A549 (cell line): ENCODE measurements at regions of chr9 and their contacts with region 1.

Region 1: DNA sequence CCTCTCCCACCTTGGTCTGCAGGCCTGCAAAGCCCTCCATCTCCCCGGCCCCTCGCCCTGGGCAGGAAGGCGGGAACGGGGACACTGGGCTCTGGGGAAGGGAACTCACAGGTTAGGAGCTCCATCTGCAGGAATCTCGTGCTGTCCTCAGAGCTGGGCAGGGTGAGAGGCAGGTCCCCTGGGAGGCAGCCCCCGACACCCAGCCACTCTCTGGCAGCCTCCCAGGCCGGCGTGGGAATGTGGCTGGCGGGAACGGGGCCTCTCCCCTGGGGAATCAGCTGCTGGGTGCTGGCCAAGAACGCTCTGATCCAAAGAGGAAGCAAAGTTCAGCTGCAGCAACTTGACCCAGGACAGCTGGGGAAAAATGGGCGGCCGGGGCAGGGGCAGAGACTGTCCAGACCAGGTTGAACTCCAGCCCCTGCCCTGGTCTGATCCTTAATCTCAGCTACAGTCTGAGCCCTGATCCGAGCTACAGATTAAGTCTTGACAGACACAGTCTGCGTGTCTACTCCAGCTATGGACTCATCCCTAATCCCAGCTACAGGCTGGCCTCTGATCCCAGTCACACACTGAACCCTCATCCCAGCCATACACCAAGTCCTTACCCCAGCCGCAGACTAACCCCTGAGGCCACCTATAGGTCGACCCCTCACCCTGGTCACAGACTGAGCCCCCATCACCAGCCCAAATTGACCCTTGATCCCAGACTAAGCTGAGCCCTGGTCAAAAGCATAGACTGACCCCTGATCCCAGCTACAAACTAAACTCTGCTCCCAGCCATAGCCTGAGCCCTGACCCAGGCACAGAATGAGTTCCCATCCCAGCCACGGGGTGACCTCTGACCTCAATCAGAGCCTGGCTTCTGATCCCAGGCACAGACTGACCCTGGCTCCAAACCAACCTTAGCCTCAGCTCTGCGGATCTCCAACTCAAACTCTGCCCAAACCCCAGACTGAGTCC is 37.3 kb upstream of the EGFL7 start:
- DNase-seq: peak; percentile 66 to 67
- ATAC-seq: peak; percentile 45 to 78; a peak in 5 of 6 replicates
- H3K4me3 ChIP-seq: no peak overlapping the region
- H3K27ac ChIP-seq: peak overlapping the region; percentile 10 to 68; a peak in 5 of 6 replicates
- H3K4me1 ChIP-seq: peaks cover 40% of the 10 kb centered on the region
- CTCF ChIP-seq: peak; percentile 68
- EP300 ChIP-seq: no peak
- POLR2A ChIP-seq: no peak
- RAD21 ChIP-seq: peak; percentile 92 to 94

Region 2: GRCh38 chr9:135098400-135099105 is 1526.8 kb before region 1 on chr9:
- CTCF ChIA-PET with region 1: no interaction called
- POLR2A ChIA-PET with region 1: no interaction called
- DNase-seq: no peak
- ATAC-seq: 0 out of 6 replicates have a peak, but pooled peaks of 1 of the 2 experiments have one; percentile 35
- H3K4me3 ChIP-seq: no peak overlapping the region
- H3K27ac ChIP-seq: no peak overlapping the region
- H3K4me1 ChIP-seq: no peaks in the 10 kb centered on the region
- CTCF ChIP-seq: no peak
- EP300 ChIP-seq: no peak
- POLR2A ChIP-seq: no peak
- RAD21 ChIP-seq: no peak

Region 3: GRCh38 chr9:136527721-136528691 is 97.4 kb before region 1 on chr9:
- CTCF ChIA-PET with region 1: interaction called, 13 read pairs
- POLR2A ChIA-PET with region 1: no interaction called
- DNase-seq: peak; percentile 45 to 48
- ATAC-seq: peak; percentile 32 to 66; a peak in 5 of 6 replicates
- H3K4me3 ChIP-seq: no peak overlapping the region
- H3K27ac ChIP-seq: peak overlapping the region; percentile 62 to 83
- H3K4me1 ChIP-seq: peaks cover 42% of the 10 kb centered on the region
- CTCF ChIP-seq: no peak
- EP300 ChIP-seq: no peak
- POLR2A ChIP-seq: no peak
- RAD21 ChIP-seq: 0 out of 5 replicates have a peak, but pooled peaks of 1 of the 2 experiments have one; percentile 12

Region 4: DNA sequence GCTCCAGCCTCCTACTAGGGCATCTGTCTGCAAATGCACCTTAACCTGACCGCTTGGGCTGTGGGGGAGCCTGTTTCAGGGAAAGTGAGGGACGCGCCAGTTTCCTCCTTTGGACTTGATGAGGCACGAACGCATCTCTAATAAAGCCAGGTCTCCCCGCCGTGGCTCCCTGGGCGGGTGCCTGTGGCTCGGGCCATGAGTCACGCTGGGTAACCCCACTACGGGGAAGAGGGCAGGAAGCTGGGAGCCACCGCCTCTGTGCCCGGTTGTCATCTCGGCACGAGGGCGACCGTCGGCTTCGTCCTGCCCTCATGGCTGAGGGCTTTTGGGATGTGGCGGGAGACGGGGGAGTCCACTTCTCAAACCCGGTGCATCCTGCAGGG is 91.6 kb before region 1 on chr9:
- CTCF ChIA-PET with region 1: interaction called, 25 read pairs
- POLR2A ChIA-PET with region 1: no interaction called
- DNase-seq: no peak
- ATAC-seq: no peak
- H3K4me3 ChIP-seq: no peak overlapping the region
- H3K27ac ChIP-seq: peak overlapping the region in 1 of 2 experiments; percentile 36; a peak in 1 of 6 replicates
- H3K4me1 ChIP-seq: peaks cover 33% of the 10 kb centered on the region
- CTCF ChIP-seq: no peak
- EP300 ChIP-seq: no peak
- POLR2A ChIP-seq: no peak
- RAD21 ChIP-seq: no peak

Region 5: GRCh38 chr9:136539427-136540421 is 85.7 kb before region 1 on chr9:
- CTCF ChIA-PET with region 1: interaction called, 25 read pairs
- POLR2A ChIA-PET with region 1: no interaction called
- DNase-seq: no peak
- ATAC-seq: no peak
- H3K4me3 ChIP-seq: no peak overlapping the region
- H3K27ac ChIP-seq: no peak overlapping the region
- H3K4me1 ChIP-seq: peaks cover 16% of the 10 kb centered on the region; the same call in 2 of the 3 replicates
- CTCF ChIP-seq: no peak
- EP300 ChIP-seq: no peak
- POLR2A ChIP-seq: no peak
- RAD21 ChIP-seq: no peak

Region 6: GRCh38 chr9:136546699-136547501 is 78.5 kb before region 1 on chr9:
- CTCF ChIA-PET with region 1: interaction called, 13 read pairs
- POLR2A ChIA-PET with region 1: no interaction called
- DNase-seq: peak in 1 of 2 experiments; percentile 57
- ATAC-seq: peak; percentile 27 to 51
- H3K4me3 ChIP-seq: peak overlapping the region; percentile 91
- H3K27ac ChIP-seq: peak overlapping the region; percentile 95 to 98
- H3K4me1 ChIP-seq: peaks cover 45% of the 10 kb centered on the region
- CTCF ChIP-seq: no peak
- EP300 ChIP-seq: no peak
- POLR2A ChIP-seq: 0 out of 2 replicates have a peak, but pooled peaks have one; percentile 21
- RAD21 ChIP-seq: no peak

Region 7: DNA sequence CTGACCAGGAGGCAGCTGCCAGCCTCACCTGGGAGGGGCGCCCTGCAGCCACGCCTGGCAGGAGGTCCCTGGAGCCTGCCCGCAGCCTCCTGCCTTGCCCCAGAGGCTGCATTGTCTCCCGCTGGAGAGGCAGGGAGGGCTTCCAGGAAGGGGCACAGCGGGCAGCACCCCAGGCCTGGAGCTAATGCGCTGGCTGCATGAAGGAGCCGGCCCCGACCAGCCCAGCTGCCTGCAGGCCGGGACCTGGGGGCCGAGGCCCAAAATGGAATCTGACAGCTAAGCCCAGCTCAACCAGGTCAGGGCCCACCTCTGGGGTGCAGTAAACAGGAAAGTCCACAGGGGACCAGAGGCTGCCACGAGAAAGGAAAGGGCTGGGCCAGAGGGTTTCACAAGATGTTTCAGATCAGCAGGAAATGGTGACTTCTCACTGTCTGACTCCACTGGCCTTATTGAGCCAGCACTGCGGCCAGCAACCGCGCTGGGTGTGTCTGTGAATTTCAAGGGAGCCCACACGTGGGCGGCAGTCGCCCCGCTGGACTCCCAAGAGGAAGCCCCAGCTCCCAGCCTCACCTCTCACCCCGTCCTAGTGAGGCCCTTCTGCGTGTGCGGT is 60.9 kb before region 1 on chr9:
- CTCF ChIA-PET with region 1: interaction called, 10 read pairs
- POLR2A ChIA-PET with region 1: no interaction called
- DNase-seq: no peak
- ATAC-seq: peak; percentile 45 to 55
- H3K4me3 ChIP-seq: no peak overlapping the region
- H3K27ac ChIP-seq: peak overlapping the region in 1 of 2 experiments; percentile 42; a peak in 3 of 6 replicates
- H3K4me1 ChIP-seq: peaks cover 30% of the 10 kb centered on the region
- CTCF ChIP-seq: no peak
- EP300 ChIP-seq: no peak
- POLR2A ChIP-seq: no peak
- RAD21 ChIP-seq: 0 out of 5 replicates have a peak, but pooled peaks of 1 of the 2 experiments have one; percentile 4

Region 8: GRCh38 chr9:136572003-136572827 is 53.2 kb before region 1 on chr9:
- CTCF ChIA-PET with region 1: interaction called, 10 read pairs
- POLR2A ChIA-PET with region 1: no interaction called
- DNase-seq: peak; percentile 55 to 76
- ATAC-seq: peak; percentile 40 to 71
- H3K4me3 ChIP-seq: no peak overlapping the region
- H3K27ac ChIP-seq: peak overlapping the region; percentile 75
- H3K4me1 ChIP-seq: peaks cover 71% of the 10 kb centered on the region
- CTCF ChIP-seq: no peak
- EP300 ChIP-seq: peak in 1 of 2 experiments; percentile 25; a peak in 1 of 5 replicates
- POLR2A ChIP-seq: no peak
- RAD21 ChIP-seq: no peak